ENCODE measurements at regions of chr19 and their contacts with region 1.

Region 1: DNA sequence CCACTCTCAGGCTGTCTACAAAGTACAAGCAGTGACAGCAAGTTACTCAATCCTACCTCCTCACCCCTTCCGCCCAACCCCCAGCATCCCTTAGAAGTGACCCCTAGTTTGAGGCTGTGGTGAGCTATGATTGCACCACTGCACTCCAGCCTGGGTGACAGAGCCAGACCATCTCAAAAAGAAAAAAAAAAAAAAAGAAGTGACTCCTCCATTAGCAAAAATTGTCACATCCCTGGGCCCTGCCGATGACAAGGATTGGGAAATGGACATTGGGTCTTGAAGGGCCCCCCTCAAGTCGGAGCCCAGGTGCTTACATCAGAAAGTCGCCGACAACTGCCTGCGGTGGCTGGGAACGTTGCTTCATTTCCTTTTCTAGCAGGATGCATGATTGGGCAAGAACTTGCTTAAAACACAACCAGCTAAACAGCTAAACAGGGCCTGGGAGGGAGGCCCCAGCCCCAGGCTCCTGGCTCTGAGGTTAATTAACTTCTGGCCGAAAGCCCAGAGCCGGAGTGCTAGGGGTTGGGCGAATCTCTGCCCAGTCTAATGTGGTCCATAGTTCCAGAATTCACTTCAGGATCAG is 15.3 kb downstream of the RAB3D start:
- DNase-seq: peak; percentile 71
- ATAC-seq: peak; percentile 92
- H3K4me3 ChIP-seq: peak overlapping the region; percentile 27
- H3K27ac ChIP-seq: peak overlapping the region; percentile 88
- H3K4me1 ChIP-seq: peaks cover 41% of the 10 kb centered on the region
- H3K27me3 ChIP-seq: no peaks in the 10 kb centered on the region
- CTCF ChIP-seq: no peak
- EP300 ChIP-seq: peak in 1 of 2 experiments; percentile 19; a peak in 1 of 4 replicates
- POLR2A ChIP-seq: peak; percentile 56; the same call in 1 of the 2 replicates
- RAD21 ChIP-seq: no peak; the same call in 1 of the 2 replicates

Region 2: GRCh38 chr19:11090054-11090900 is 233.9 kb before region 1 on chr19:
- CTCF ChIA-PET with region 1: no interaction called
- POLR2A ChIA-PET with region 1: no interaction called
- RAD21 ChIA-PET with region 1: no interaction called
- SMC1A ChIA-PET with region 1: no interaction called
- in situ Hi-C with region 1: no loop called
- intact Hi-C with region 1: no loop called
- DNase-seq: peak; percentile 76
- ATAC-seq: peak; percentile 88
- H3K4me3 ChIP-seq: peak overlapping the region; percentile 97
- H3K27ac ChIP-seq: peak overlapping the region; percentile 91
- H3K4me1 ChIP-seq: peaks cover 35% of the 10 kb centered on the region
- H3K27me3 ChIP-seq: no peaks in the 10 kb centered on the region
- CTCF ChIP-seq: peak in 2 of 3 experiments; percentile 12 to 16; a peak in 1 of 6 replicates
- EP300 ChIP-seq: no peak
- POLR2A ChIP-seq: peak; percentile 96
- RAD21 ChIP-seq: no peak

Region 3: DNA sequence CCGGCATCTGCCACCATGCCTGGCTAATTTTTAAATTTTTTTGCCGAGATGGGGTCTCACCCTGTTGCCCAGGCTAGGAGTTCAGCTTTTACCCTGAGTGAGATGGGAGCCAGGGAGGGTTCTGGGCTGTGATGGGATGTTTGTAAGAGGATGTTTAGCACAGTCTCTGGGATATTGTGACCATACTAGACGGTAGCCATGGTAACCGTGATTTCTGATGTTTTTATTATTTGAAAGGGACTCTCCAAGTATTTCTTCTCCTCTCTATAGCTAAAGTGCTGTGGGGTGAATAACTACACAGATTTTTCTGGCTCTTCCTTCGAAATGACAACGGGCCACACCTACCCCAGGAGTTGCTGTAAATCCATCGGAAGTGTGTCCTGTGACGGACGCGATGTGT is 17.8 kb before region 1 on chr19:
- CTCF ChIA-PET with region 1: no interaction called
- POLR2A ChIA-PET with region 1: interaction called, 14 read pairs
- RAD21 ChIA-PET with region 1: no interaction called
- SMC1A ChIA-PET with region 1: no interaction called
- in situ Hi-C with region 1: no loop called
- intact Hi-C with region 1: no loop called
- DNase-seq: no peak
- ATAC-seq: no peak
- H3K4me3 ChIP-seq: no peak overlapping the region
- H3K27ac ChIP-seq: no peak overlapping the region
- H3K4me1 ChIP-seq: no peaks in the 10 kb centered on the region
- H3K27me3 ChIP-seq: no peaks in the 10 kb centered on the region
- CTCF ChIP-seq: no peak
- EP300 ChIP-seq: no peak
- POLR2A ChIP-seq: no peak
- RAD21 ChIP-seq: no peak

Region 4: GRCh38 chr19:11339254-11340098 is 15.3 kb after region 1 on chr19 and contains the start of gene RAB3D:
- CTCF ChIA-PET with region 1: interaction called, 10 read pairs
- POLR2A ChIA-PET with region 1: interaction called, 23 read pairs
- RAD21 ChIA-PET with region 1: interaction called, 4 read pairs
- SMC1A ChIA-PET with region 1: interaction called, 7 read pairs
- in situ Hi-C with region 1: no loop called
- intact Hi-C with region 1: no loop called
- DNase-seq: peak; percentile 50
- ATAC-seq: peak; percentile 99
- H3K4me3 ChIP-seq: peak within 1 kb of the TSS; percentile 93
- H3K27ac ChIP-seq: peak within 1 kb of the TSS; percentile 45
- H3K4me1 ChIP-seq: peaks cover 6% of the 10 kb centered on the region
- H3K27me3 ChIP-seq: no peaks in the 10 kb centered on the region
- CTCF ChIP-seq: no peak
- EP300 ChIP-seq: no peak
- POLR2A ChIP-seq: peak; percentile 80
- RAD21 ChIP-seq: no peak
- polyA plus RNA-seq, gene RAB3D: 1.1 to 4.1 TPM

Region 5: DNA sequence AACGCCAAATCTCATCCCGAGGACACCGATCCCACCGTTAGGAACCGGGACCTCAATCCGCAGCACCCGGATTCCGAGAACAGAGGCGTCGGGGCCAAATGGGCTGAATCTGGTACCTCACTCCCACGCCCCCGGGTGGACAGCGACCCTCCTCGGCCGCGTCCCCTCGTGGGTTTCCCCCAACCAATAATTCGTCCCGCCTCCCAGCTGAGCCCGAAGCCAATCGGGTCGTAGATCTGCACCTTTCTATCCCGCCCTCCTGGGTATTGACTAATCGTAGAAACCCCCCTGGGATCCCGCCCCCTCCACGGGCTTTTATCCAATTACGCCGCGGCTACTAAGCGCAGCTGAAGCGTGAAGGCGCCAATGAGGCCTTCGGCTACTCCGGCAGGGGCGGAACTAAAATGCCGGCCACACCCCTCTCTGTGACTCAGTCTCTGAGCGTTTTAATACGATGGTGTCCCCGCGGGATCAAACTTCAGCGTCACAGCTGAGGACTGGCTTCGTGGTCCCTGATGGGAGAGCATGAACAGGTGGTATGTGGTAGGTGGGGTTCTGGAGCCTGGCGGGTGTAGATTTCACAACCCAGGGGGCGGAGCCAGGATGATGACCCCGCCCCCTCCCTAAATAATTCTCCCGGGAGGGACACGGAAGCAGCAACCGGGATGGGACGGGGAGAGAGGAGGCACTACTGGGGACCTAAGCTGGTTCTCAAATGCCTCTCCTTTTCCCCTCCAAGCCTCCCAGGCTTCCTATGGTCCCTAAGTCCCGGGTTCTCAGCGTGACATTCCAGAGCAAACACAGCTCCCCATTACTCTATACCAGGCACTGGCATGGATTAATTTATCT is 22.1 kb after region 1 on chr19 and contains the starts of genes CCDC159 and TMEM205:
- CTCF ChIA-PET with region 1: interaction called, 8 read pairs
- POLR2A ChIA-PET with region 1: interaction called, 23 read pairs
- RAD21 ChIA-PET with region 1: interaction called, 11 read pairs
- SMC1A ChIA-PET with region 1: interaction called, 4 read pairs
- in situ Hi-C with region 1: no loop called
- intact Hi-C with region 1: no loop called
- DNase-seq: peak; percentile 97
- ATAC-seq: peak; percentile 96
- H3K4me3 ChIP-seq: peak within 1 kb of the TSS; percentile 95
- H3K27ac ChIP-seq: peak within 1 kb of the TSS; percentile 85
- H3K4me1 ChIP-seq: peaks cover 11% of the 10 kb centered on the region
- H3K27me3 ChIP-seq: no peaks in the 10 kb centered on the region
- CTCF ChIP-seq: peak in 2 of 3 experiments; percentile 20 to 21; a peak in 2 of 6 replicates
- EP300 ChIP-seq: no peak
- POLR2A ChIP-seq: peak; percentile 69
- RAD21 ChIP-seq: no peak
- polyA plus RNA-seq, gene CCDC159: 0.61 to 3.9 TPM
- polyA plus RNA-seq, gene TMEM205: 27.8 to 39.4 TPM

Region 6: DNA sequence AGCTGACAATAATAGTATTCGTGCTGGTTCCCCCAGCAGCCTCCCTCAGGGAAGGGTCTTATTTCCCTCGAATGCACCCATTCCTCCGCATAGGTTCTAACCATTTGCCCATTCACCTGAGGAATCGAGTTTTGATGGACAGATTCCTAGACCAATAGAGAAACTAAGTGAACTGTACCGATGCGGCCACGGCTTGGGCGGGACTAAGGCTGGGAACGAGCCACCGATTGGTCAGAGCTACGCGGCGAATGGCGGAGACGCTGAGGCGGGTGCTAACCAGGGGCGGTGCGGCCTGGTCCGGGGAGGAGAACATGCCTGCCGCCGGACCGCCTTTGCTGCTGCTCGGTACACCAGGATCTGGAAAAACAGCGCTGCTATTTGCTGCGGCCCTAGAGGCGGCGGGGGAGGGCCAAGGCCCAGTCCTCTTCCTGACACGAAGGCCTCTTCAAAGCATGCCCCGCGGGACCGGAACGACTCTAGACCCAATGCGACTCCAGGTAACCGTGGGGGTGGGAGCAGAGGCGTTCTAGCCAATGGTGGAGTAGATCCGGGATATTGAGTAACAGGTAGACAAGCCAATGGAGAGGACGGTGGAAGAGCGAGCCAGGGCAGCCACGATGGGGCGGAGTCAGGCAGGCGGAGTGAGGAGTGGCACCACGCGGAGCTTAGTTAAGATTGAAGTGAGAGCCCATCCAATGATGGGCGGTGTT is 50.4 kb after region 1 on chr19 and contains the start of gene SWSAP1:
- CTCF ChIA-PET with region 1: interaction called, 8 read pairs
- POLR2A ChIA-PET with region 1: interaction called, 6 read pairs
- RAD21 ChIA-PET with region 1: interaction called, 3 read pairs
- SMC1A ChIA-PET with region 1: interaction called, 13 read pairs
- in situ Hi-C with region 1: no loop called
- intact Hi-C with region 1: no loop called
- DNase-seq: peak; percentile 99
- ATAC-seq: peak; percentile 95
- H3K4me3 ChIP-seq: peak within 1 kb of the TSS; percentile 77
- H3K27ac ChIP-seq: peak within 1 kb of the TSS; percentile 94
- H3K4me1 ChIP-seq: peaks cover 21% of the 10 kb centered on the region
- H3K27me3 ChIP-seq: no peaks in the 10 kb centered on the region
- CTCF ChIP-seq: no peak
- EP300 ChIP-seq: no peak
- POLR2A ChIP-seq: peak; percentile 95
- RAD21 ChIP-seq: no peak
- polyA plus RNA-seq, gene SWSAP1: 0.18 to 1.0 TPM

Region 7: GRCh38 chr19:11496391-11497163 is 172.4 kb after region 1 on chr19:
- CTCF ChIA-PET with region 1: no interaction called
- POLR2A ChIA-PET with region 1: interaction called, 10 read pairs
- RAD21 ChIA-PET with region 1: no interaction called
- SMC1A ChIA-PET with region 1: no interaction called
- in situ Hi-C with region 1: no loop called
- intact Hi-C with region 1: no loop called
- DNase-seq: no peak
- ATAC-seq: peak; percentile 97
- H3K4me3 ChIP-seq: no peak overlapping the region
- H3K27ac ChIP-seq: no peak overlapping the region
- H3K4me1 ChIP-seq: no peaks in the 10 kb centered on the region
- H3K27me3 ChIP-seq: no peaks in the 10 kb centered on the region
- CTCF ChIP-seq: peak; percentile 58 to 77 (median 73)
- EP300 ChIP-seq: no peak
- POLR2A ChIP-seq: no peak
- RAD21 ChIP-seq: peak; percentile 53

Measured in GM12878 (cell line).